Activated B cell treated with CpG ODN at 0.5 μM for 24 hours (primary cell): ENCODE measurements at regions of chr3 and their contacts with region 1.

Region 1: DNA sequence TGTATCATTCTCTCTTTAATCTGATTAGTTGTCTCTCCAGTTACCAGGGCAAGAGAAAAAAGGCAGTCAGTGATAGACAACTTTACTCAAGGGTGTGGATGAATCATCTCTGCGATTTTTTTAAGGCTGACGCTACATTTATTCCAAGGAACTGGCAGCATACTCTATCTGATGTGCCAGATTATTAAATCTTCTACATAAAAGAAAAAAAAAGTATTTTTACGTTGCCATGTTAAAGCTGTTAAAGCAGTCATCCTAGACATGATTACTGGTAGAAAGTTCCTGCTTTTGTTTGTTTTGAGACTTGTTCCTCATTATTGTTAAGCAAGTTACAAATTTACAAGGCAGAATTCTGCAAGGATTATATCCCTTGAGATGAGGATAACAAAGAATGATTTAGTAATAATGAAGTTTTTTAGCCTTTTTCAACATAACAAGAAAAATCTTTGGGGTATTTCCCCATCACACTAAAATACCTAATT is 121.7 kb downstream of the CBLB start:
- DNase-seq: no peak
- ATAC-seq: no peak
- H3K4me3 Mint-ChIP-seq: no peak overlapping the region
- H3K27ac Mint-ChIP-seq: peak overlapping the region; percentile 26
- H3K4me1 Mint-ChIP-seq: peaks cover 44% of the 10 kb centered on the region
- H3K27me3 Mint-ChIP-seq: no peaks in the 10 kb centered on the region
- CTCF ChIP-seq: no peak

Region 2: GRCh38 chr3:105729667-105730066 is 17.4 kb before region 1 on chr3:
- CTCF ChIA-PET with region 1: no interaction called
- POLR2A ChIA-PET with region 1: no interaction called
- intact Hi-C with region 1: loop called (anchors 2 kb)
- DNase-seq: no peak
- ATAC-seq: no peak
- H3K4me3 Mint-ChIP-seq: no peak overlapping the region
- H3K27ac Mint-ChIP-seq: no peak overlapping the region
- H3K4me1 Mint-ChIP-seq: peaks cover 16% of the 10 kb centered on the region
- H3K27me3 Mint-ChIP-seq: no peaks in the 10 kb centered on the region
- CTCF ChIP-seq: no peak

Region 3: DNA sequence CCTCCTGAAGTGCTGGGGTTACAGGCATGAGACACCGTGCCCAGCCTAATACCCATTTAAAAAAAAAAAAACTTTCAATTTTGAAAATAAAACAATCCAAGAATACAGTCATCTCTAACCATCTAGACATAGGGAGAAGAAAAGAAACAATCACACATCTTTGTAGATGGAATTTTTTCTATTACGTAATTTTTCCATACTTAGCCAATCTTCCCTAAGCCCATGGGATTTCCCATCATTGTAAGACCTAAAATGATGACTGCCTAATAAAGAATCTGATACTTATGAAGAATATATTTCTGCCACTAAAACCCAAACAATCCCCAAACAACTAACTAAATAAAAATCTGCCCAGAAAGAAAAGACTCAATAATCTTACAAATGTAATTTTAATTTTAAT is 33.0 kb after region 1 on chr3:
- CTCF ChIA-PET with region 1: no interaction called
- POLR2A ChIA-PET with region 1: no interaction called
- intact Hi-C with region 1: loop called (anchors 5 kb)
- DNase-seq: no peak
- ATAC-seq: no peak
- H3K4me3 Mint-ChIP-seq: no peak overlapping the region
- H3K27ac Mint-ChIP-seq: no peak overlapping the region
- H3K4me1 Mint-ChIP-seq: peaks cover 16% of the 10 kb centered on the region
- H3K27me3 Mint-ChIP-seq: no peaks in the 10 kb centered on the region
- CTCF ChIP-seq: no peak

Region 4: GRCh38 chr3:106398891-106399600 is 651.9 kb after region 1 on chr3:
- CTCF ChIA-PET with region 1: no interaction called
- POLR2A ChIA-PET with region 1: no interaction called
- intact Hi-C with region 1: no loop called
- DNase-seq: no peak
- ATAC-seq: no peak
- H3K4me3 Mint-ChIP-seq: no peak overlapping the region
- H3K27ac Mint-ChIP-seq: no peak overlapping the region
- H3K4me1 Mint-ChIP-seq: peaks cover 5% of the 10 kb centered on the region
- H3K27me3 Mint-ChIP-seq: no peaks in the 10 kb centered on the region
- CTCF ChIP-seq: no peak